AG04450 (cell line): ENCODE measurements at regions of chr6 and their contacts with region 1.

Region 1: DNA sequence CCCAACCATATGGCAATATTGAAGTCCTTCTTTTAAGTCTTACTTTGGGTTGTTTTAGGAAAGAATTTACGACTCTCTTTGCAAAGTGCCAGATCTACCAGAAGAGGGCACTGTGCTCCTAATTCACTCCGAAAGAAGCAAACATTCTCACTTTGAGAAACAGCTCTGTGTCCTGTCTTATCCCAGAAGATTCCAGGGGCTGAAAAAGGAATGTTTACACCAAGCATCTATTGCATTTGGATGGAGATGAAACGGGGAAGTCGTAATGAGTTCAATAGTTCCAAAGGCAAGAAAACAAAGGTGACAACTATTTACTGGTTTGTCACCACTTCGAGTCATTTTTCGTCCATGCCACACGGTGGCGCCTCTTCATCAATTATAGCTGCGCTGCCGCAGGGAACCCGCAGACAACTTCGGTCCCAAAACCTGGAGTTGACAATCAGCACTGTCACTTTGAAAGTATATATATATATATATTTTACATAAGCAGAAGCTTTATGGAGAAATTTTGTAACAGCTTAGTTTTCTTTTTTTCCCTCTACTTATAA is 121.6 kb downstream of the MOXD1 start:
- DNase-seq: peak; percentile 54
- H3K4me3 ChIP-seq: peak overlapping the region; percentile 55
- H3K27ac ChIP-seq: no peak overlapping the region
- H3K27me3 ChIP-seq: no peaks in the 10 kb centered on the region
- CTCF ChIP-seq: peak; percentile 76

Region 2: DNA sequence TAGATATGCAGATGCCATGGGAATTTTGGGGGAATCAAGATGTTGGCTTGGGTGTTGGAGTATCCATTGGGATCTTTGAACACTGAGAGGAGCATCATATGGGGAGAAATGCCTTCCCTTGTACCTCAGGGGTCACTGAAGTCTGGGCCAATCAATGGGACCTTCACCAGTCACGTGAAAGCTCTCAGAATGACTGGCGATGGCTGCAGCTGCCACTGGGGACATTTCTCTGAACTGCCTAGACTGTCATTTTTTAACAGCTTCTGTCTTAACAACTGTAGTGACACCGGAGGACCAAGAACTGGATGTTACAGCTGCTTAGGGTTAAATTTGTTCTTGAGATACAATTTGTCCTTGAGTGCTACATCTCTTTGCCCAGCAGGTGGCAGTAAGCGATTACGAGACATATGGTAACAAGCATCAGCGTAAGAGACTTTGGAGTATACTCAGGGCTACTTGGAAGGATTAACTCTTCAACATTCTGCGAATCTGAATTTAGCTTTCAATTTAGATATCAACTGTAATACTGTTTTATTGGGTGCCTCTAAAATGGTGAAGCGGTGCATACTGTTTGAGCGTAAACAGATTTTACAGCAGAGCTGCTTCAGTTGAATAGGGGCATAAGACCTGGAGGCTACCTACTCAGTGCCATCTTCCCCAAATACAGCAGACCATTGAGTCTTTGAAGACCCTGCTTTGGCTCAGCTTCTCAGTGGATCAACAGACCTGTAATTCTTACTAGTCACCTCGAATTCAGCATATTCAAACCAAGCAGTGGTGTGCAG is 364.5 kb before region 1 on chr6:
- CTCF ChIA-PET with region 1: interaction called, 112 read pairs
- POLR2A ChIA-PET with region 1: no interaction called
- DNase-seq: peak; percentile 74
- H3K4me3 ChIP-seq: no peak overlapping the region
- H3K27ac ChIP-seq: no peak overlapping the region
- H3K27me3 ChIP-seq: no peaks in the 10 kb centered on the region
- CTCF ChIP-seq: peak; percentile 90

Region 3: DNA sequence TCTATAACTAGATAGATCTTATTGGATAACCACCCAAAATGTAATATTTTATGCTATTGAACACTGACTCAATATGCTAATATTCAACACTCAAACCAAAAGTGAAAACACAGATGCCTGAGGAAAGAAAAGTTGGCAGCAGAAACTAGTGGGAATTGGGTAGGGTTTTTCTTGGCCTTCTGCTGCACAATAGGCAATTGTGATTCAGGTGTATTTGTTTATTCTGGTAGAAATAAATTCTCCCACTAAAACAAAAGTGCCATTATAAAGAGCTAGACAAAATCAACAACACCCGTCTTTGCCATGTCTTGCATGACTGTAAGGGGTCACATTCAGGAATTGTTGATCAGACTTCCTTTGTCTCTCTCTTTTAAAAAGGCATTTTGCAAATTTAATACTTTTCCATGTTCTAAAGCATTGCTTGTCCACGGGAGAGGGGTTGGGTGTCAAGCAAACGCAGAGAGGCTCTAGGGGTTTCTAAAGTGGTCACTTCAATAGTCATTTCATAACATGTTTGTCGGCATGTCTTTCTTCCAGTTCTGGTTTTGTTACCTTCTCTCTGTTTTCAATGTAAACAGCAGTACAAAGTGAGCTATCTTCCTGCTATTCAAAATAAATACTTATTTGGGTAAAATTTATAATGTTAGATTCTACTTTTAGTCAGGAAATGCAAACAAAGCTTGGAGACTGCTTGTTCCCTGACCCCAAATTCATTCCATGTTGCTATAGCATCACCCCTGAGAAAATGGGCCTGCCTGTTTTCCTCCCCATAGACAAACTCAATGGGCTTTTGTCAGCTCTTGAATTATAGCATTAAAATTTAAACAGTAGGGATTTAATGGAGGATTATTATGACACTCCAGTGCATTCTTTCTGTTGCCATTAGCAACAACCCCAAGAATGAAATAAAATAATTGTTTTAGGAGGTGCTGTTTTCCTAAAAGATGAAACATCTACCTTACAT is 111.5 kb before region 1 on chr6:
- CTCF ChIA-PET with region 1: interaction called, 12 read pairs
- POLR2A ChIA-PET with region 1: no interaction called
- DNase-seq: no peak
- H3K4me3 ChIP-seq: no peak overlapping the region
- H3K27ac ChIP-seq: no peak overlapping the region
- H3K27me3 ChIP-seq: no peaks in the 10 kb centered on the region
- CTCF ChIP-seq: no peak

Region 4: DNA sequence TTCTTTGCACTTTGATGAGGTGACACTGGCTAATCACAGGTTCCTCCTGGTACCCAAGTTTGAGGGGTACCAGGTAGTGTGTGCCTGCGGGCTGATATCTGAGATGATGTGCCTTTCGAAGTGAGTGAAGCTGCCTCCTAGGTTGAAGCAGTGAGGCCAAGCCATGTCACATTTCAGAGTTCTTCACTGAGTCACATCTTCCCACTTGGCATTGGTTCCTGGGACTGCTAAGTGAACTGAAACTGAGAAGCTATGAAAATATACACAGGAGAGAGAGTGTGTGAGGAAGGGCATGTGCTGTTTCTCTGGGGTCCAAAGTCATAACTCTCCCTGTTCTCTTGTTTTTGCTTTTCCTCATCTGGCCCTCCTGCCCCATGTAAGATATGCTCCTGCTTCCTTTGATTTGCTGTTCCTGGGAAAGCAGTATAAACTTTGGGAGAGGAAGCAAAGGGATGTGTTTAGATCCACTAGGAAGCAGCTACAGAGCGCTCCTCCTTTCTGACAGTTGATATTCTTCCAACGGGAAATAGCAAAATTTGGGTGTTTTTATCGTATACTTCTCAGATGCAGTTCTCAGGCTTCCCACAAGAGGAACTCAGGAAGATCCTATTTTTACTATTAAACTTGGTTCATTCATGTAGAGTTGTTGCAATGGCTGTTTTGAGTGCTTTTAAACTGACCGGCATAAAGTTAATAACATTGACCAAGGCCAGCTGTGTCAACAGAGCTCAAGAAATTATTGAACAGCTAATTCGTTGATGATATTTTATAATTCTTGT is 32.1 kb before region 1 on chr6:
- CTCF ChIA-PET with region 1: interaction called, 19 read pairs
- POLR2A ChIA-PET with region 1: no interaction called
- DNase-seq: no peak
- H3K4me3 ChIP-seq: no peak overlapping the region
- H3K27ac ChIP-seq: no peak overlapping the region
- H3K27me3 ChIP-seq: no peaks in the 10 kb centered on the region
- CTCF ChIP-seq: peak; percentile 25

Region 5: DNA sequence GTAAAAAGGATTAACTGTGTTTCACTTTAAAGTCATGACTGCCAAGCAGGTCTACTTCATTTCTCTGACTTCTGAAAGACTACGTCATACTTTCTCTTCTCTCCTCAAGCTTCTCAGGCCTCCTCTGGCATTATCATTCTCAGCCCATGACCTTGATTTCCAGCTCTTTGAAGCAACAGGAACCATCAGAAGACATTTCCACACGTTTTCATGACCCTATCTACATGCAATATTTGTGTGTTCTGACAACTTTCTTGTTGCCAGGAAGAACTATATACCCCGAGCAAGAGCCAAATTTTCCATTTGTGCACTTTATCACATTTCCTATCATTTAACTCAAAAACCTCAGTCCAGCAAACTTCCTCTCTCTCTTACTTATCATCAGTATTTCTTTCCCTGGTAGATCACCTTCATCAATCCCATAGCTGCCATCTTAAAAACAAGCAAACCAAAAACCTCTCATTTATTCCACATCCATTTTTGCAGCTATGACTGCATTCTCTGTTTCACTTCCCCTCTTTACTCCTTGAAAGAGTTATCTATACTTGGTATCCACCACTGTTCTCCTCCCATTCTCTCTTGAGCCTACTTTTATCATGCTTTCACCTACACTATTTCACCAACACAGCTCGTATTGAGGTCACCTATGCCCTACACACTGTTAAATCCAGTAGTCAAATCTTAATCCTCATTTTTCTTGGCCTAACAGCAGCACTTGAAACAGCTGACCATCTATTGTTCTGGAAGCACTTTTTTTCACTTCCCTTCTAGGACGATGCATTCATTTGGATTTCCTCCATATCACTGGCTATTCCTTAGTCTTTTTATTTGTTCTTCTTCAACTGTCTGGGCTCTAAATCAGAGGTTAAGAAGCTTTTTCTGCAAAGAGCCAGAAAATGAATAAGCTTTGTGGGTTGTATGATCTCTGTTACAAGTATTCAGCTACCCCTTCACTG is 186.1 kb after region 1 on chr6:
- CTCF ChIA-PET with region 1: interaction called, 28 read pairs
- POLR2A ChIA-PET with region 1: no interaction called
- DNase-seq: no peak
- H3K4me3 ChIP-seq: no peak overlapping the region
- H3K27ac ChIP-seq: no peak overlapping the region
- H3K27me3 ChIP-seq: no peaks in the 10 kb centered on the region
- CTCF ChIP-seq: no peak

Region 6: GRCh38 chr6:132512638-132513632 is 233.3 kb after region 1 on chr6 and contains the start of gene STX7:
- CTCF ChIA-PET with region 1: interaction called, 10 read pairs
- POLR2A ChIA-PET with region 1: no interaction called
- DNase-seq: peak; percentile 52
- H3K4me3 ChIP-seq: peak within 1 kb of the TSS; percentile 80
- H3K27ac ChIP-seq: peak within 1 kb of the TSS; percentile 25
- H3K27me3 ChIP-seq: peaks cover 3% of the 10 kb centered on the region
- CTCF ChIP-seq: no peak
- polyA plus RNA-seq, gene STX7: 37.0 and 42.7 TPM in 2 replicates